Activated T-helper 1 cell treated with anti-CD3 and anti-CD28 coated beads, Interleukin-12 subunit alpha, Interleukin-12 subunit beta, Interleukin-2, Interleukin-4 antibody, amounts not matched to agents 30 ng/mL and 10 ng/mL and 1 ng/mL, durations not matched to agents 14 hours and 24 hours and 36 hours (primary cell): ENCODE measurements at regions of chr2 and their contacts with region 1.

Region 1: DNA sequence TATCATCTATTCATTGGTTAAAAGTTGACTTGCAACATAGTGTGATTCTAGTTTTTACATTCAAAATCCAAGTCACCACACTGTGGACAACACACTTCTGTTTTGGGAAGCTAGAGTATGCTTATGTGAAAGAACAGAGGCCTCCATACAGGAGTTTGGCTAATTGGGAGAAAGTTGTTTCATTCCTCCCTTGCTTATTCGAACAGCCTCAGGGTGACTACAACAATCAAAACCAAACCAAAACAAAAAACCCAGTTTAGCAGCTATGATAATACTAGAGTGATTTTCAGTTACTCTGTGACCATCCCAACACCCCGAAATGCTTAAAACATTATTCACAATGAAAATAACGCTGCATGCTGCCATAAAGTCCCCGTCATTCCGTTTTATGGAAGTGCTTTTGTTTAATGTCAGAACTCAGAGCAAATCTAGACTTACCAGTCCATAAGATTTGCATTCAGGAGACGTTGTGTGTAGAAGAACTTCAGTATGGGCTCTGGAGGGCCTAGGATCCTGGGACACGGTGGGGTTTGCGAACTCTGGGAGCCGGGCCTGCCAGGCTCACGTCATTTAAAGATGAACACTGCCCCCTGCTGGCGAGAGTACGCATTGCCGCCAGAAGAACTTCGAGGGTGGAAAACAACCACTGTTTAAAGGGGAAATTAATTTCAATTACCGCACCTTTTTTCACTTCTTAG is 111.4 kb downstream of the FTCDNL1 start:
- DNase-seq: peak; percentile 21
- H3K4me3 Mint-ChIP-seq: no peak overlapping the region
- H3K27ac Mint-ChIP-seq: no peak overlapping the region
- H3K4me1 Mint-ChIP-seq: peaks cover 6% of the 10 kb centered on the region
- H3K27me3 Mint-ChIP-seq: peaks cover 20% of the 10 kb centered on the region

Region 2: GRCh38 chr2:198309673-198310280 is 1429.8 kb before region 1 on chr2:
- intact Hi-C with region 1: loop called (anchors 1 kb)
- DNase-seq: peak; percentile 25
- H3K4me3 Mint-ChIP-seq: no peak overlapping the region
- H3K27ac Mint-ChIP-seq: no peak overlapping the region
- H3K4me1 Mint-ChIP-seq: no peaks in the 10 kb centered on the region
- H3K27me3 Mint-ChIP-seq: peaks cover 7% of the 10 kb centered on the region

Region 3: GRCh38 chr2:198883604-198884003 is 856.0 kb before region 1 on chr2:
- intact Hi-C with region 1: no loop called
- DNase-seq: no peak
- H3K4me3 Mint-ChIP-seq: no peak overlapping the region
- H3K27ac Mint-ChIP-seq: no peak overlapping the region
- H3K4me1 Mint-ChIP-seq: no peaks in the 10 kb centered on the region
- H3K27me3 Mint-ChIP-seq: no peaks in the 10 kb centered on the region

Region 4: GRCh38 chr2:199055336-199055735 is 684.2 kb before region 1 on chr2:
- intact Hi-C with region 1: no loop called
- DNase-seq: no peak
- H3K4me3 Mint-ChIP-seq: no peak overlapping the region
- H3K27ac Mint-ChIP-seq: no peak overlapping the region
- H3K4me1 Mint-ChIP-seq: no peaks in the 10 kb centered on the region
- H3K27me3 Mint-ChIP-seq: no peaks in the 10 kb centered on the region

Region 5: DNA sequence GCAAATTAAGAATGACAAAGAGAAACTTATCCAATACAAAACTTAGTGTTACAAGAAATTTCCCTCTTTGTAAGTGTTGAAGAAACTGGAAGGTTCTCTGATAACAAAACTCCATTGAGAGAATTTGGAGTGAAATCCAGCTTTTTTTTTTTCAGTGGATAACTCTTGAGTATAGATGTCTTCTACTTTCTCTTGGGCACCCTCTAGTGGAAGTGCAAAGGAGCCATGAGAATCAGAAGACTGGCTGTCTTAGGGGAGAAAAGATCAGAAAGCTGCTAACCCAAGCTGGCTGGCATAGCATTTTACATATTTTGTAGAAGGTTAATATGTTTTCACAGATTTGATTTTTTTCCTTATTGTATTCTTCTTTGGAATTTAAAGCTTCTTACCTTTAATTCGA is 143.0 kb before region 1 on chr2:
- intact Hi-C with region 1: loop called (anchors 10 kb)
- DNase-seq: no peak
- H3K4me3 Mint-ChIP-seq: no peak overlapping the region
- H3K27ac Mint-ChIP-seq: no peak overlapping the region
- H3K4me1 Mint-ChIP-seq: no peaks in the 10 kb centered on the region
- H3K27me3 Mint-ChIP-seq: peaks cover 4% of the 10 kb centered on the region

Region 6: DNA sequence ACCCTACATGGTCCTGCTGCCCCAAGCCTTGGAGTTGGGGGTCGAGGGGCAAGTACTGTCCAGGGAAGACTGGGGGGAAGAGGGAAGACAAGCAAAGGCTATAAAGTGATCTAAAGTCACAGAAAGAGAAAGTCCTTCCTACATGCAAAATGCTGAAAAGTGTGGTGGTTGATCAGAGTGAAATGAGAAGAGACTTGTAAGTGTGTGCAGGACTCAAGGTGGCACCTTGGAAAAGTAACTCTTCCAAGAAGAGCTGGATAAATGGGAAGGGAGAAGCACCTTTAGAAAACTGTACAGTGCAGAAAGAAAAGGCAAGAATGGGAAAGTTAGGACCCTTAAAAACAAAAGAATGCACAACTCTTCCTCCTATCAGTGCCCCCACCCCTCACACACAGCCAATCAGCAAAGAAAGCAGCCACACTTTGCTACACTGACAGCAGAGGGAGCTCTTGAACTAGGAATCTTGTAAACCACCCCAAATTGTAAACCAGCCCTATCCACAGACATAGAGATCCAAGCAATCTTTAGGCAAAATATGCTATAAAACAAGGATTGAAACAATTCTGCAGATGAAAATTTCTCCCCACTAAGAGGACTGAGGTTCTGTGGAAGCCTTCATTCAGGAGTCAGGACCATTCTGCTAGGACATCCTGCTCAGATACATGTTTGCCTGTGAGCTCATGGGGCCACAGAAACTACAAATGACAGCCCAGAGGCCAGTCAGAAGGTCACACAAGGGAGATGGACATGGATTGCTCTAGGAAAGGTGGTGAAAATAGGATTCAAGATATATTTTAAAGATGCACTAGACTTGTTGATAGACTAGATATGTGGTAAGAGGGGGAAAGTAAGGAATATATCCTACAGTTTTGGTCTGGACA is 35.0 kb before region 1 on chr2:
- intact Hi-C with region 1: loop called (anchors 1 kb)
- DNase-seq: no peak
- H3K4me3 Mint-ChIP-seq: no peak overlapping the region
- H3K27ac Mint-ChIP-seq: no peak overlapping the region
- H3K4me1 Mint-ChIP-seq: peaks cover 4% of the 10 kb centered on the region
- H3K27me3 Mint-ChIP-seq: peaks cover 8% of the 10 kb centered on the region